Ovary (tissue), 10 donors: ENCODE measurements at regions of chr7 and their contacts with region 1.

Region 1: GRCh38 chr7:7221602-7222038 is 39.3 kb downstream of the C1GALT1 start:
- DNase-seq: no peak
- H3K4me3 ChIP-seq: no peak overlapping the region
- H3K27ac ChIP-seq: no peak overlapping the region
- H3K4me1 ChIP-seq: no peaks in the 10 kb centered on the region
- H3K27me3 ChIP-seq: no peaks in the 10 kb centered on the region
- CTCF ChIP-seq: no peak
- EP300 ChIP-seq: no peak
- POLR2A ChIP-seq: no peak

Region 2: DNA sequence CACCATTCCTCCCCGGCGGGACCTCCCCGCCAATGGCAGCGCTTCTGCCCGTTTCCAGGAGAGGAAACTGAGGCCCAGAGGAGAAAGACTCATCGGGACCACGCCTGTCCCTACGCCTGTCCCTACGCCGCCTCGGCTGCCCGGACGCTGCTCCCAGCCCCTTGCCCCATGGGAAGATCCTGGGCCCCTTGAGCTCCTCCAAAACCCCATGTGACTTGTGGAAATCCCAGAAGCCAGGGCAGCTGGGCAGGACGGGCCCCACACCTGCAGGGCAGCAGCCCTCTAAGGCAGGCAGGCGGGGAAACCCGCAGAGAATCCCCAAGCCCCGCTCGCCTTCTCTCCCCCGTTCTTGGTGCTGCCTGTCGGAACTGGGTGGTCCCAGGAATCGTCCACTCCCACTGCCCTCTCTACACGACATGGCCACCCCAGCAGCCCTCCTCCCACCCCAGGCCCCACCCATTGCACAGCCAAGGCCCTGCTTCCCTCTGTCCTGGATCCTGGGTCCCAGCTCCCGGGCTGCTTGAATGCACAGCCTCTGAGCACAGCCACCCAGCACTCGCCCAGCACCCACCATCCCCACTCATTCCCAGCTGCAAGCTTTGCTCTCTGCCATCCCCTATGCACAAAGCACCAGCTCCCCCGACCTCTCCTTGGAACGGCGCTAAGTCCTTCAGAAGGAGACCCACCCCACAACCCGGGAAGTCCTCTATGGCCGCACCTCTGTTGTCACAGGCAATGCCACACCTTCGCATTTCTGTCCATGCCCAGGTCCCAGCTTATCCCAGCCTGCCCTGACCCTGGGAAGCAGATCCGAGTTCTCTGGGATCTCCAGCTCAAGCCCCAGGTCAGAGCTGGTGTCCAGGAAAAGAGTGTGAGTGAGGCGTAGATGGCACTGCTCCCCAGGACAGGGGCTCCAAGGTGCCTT is 1888.2 kb before region 1 on chr7:
- intact Hi-C with region 1: loop called in 1 of 4 experiments (anchors 5 kb)
- DNase-seq: no peak
- H3K4me3 ChIP-seq: no peak overlapping the region
- H3K27ac ChIP-seq: no peak overlapping the region
- H3K4me1 ChIP-seq: no peaks in the 10 kb centered on the region
- H3K27me3 ChIP-seq: no peaks in the 10 kb centered on the region
- CTCF ChIP-seq: no peak
- EP300 ChIP-seq: no peak
- POLR2A ChIP-seq: no peak

Region 3: DNA sequence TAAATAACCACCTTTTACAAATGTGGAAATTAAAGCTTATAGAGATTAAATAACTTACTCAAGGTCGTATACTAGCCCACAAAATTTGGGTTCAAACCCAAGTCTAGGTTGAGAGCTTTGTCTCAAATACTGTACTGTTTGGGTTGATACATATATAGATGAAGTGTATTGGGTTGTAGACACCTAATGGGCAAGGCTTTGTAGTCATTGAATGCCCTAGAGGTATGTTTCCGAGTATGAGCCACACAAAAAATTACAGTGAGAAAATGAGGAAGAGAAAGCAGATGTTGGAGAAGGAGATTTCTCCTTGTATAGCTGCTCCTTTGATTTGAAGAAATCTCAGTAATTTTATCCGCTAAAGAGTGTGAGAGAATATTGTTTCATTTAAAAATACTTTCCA is 21.3 kb after region 1 on chr7:
- intact Hi-C with region 1: no loop called
- DNase-seq: no peak
- H3K4me3 ChIP-seq: no peak overlapping the region
- H3K27ac ChIP-seq: no peak overlapping the region
- H3K4me1 ChIP-seq: no peaks in the 10 kb centered on the region
- H3K27me3 ChIP-seq: no peaks in the 10 kb centered on the region
- CTCF ChIP-seq: no peak
- EP300 ChIP-seq: no peak
- POLR2A ChIP-seq: no peak

Region 4: GRCh38 chr7:7498856-7499580 is 277.4 kb after region 1 on chr7:
- intact Hi-C with region 1: no loop called
- DNase-seq: no peak
- H3K4me3 ChIP-seq: no peak overlapping the region
- H3K27ac ChIP-seq: no peak overlapping the region
- H3K4me1 ChIP-seq: no peaks in the 10 kb centered on the region
- H3K27me3 ChIP-seq: no peaks in the 10 kb centered on the region
- CTCF ChIP-seq: no peak
- EP300 ChIP-seq: no peak
- POLR2A ChIP-seq: no peak